ENCODE measurements at regions of chr10 and their contacts with region 1.

Region 1: GRCh38 chr10:68331455-68332258 is at the start of gene HNRNPH3:
- DNase-seq: peak; percentile 97 to 100 (median 99)
- ATAC-seq: peak; percentile 80 to 84
- H3K4me3 Mint-ChIP-seq: peak within 1 kb of the TSS; percentile 97 to 100 (median 99)
- H3K27ac Mint-ChIP-seq: peak within 1 kb of the TSS; percentile 99 to 100 (median 100)
- H3K4me1 Mint-ChIP-seq: peaks cover 27 to 66% (median 48%) of the 10 kb centered on the region in 4 donors
- H3K27me3 Mint-ChIP-seq: peaks cover 0 to 6% (median 0%) of the 10 kb centered on the region in 5 donors
- polyA plus RNA-seq, gene HNRNPH3: 116 to 166 (median 144) TPM

Region 2: DNA sequence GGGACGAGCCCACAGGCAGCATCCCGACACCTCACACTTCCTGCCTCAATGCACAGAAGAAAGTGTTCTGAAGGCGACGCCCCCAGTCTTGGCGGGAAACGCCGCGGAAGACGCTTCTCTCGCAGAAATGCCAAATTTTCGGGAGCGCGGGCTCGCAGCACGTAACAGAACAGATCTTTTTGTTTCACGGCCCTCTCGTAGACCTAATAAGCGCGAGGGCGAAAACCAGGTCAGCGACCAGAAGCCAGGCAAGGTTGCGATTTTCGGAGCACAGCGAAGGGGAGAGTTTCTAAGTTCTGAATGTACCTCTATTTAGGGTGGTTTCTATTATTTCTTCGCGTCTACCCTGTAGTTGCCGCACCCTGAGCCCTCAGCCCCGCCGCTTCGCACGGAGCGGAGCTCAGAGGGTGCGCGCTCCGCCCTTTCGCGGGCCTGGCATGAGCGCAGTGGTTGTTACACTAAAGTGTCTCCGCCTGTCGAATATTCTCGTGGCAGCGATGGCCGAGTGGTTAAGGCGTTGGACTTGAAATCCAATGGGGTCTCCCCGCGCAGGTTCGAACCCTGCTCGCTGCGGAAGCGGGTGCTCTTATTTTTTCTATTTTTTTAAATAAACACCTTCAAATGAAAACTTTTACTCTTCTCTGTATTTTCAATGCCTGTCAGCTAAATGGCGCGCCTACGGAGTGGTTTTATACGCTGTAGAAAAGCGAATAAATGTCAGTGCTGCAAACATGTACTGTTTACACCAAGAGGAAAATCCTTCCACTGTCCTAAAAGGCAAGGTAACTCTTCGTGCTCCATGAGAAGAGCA is 567.4 kb before region 1 on chr10:
- POLR2A ChIA-PET with region 1: interaction called, 18 read pairs
- DNase-seq: peak; percentile 86 to 100 (median 96)
- ATAC-seq: peak; percentile 82 to 85
- H3K4me3 Mint-ChIP-seq: peak overlapping the region; percentile 86 to 99 (median 93)
- H3K27ac Mint-ChIP-seq: peak overlapping the region; percentile 97 to 100 (median 99)
- H3K4me1 Mint-ChIP-seq: peaks cover 7 to 26% (median 19%) of the 10 kb centered on the region in 4 donors
- H3K27me3 Mint-ChIP-seq: peaks cover 0 to 5% (median 0%) of the 10 kb centered on the region in 5 donors

Region 3: DNA sequence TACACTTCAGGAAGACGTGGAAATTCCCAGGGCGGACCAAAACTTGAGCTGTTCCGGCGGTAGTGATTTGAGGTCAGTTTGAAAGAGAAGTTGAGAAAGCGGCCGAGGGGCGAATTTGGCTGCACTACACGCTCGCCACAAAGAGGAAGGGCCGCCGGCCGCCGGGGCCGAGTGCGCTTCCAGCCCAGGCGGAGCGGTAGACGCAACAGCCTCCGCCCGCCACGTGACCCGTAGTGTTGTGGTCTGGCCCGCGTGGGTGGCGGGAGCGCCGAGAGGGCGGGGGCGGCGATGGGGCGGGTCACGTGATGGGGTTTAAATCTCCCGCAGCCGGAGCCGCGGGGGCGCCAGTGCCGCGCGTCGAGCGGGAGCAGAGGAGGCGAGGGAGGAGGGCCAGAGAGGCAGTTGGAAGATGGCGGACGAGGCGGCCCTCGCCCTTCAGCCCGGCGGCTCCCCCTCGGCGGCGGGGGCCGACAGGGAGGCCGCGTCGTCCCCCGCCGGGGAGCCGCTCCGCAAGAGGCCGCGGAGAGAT is 447.3 kb before region 1 on chr10 and contains the start of gene SIRT1:
- POLR2A ChIA-PET with region 1: interaction called, 30 read pairs
- DNase-seq: peak; percentile 88 to 95 (median 92)
- ATAC-seq: peak; percentile 78 to 82
- H3K4me3 Mint-ChIP-seq: peak within 1 kb of the TSS; percentile 90 to 98 (median 95)
- H3K27ac Mint-ChIP-seq: peak within 1 kb of the TSS; percentile 94 to 98 (median 96)
- H3K4me1 Mint-ChIP-seq: peaks cover 16 to 45% (median 35%) of the 10 kb centered on the region in 4 donors
- H3K27me3 Mint-ChIP-seq: no peaks in the 10 kb centered on the region
- polyA plus RNA-seq, gene SIRT1: 10.2 to 18.7 (median 12.4) TPM

Region 4: GRCh38 chr10:68288717-68289116 is 42.9 kb before region 1 on chr10:
- POLR2A ChIA-PET with region 1: no interaction called
- DNase-seq: no peak
- ATAC-seq: no peak
- H3K4me3 Mint-ChIP-seq: no peak overlapping the region
- H3K27ac Mint-ChIP-seq: no peak overlapping the region
- H3K4me1 Mint-ChIP-seq: peaks cover 0 to 2% (median 0%) of the 10 kb centered on the region in 4 donors
- H3K27me3 Mint-ChIP-seq: no peaks in the 10 kb centered on the region

Region 5: GRCh38 chr10:68318331-68319059 is 13.2 kb before region 1 on chr10:
- POLR2A ChIA-PET with region 1: interaction called, 42 read pairs
- DNase-seq: no peak
- ATAC-seq: no peak
- H3K4me3 Mint-ChIP-seq: no peak overlapping the region
- H3K27ac Mint-ChIP-seq: peak overlapping the region in 1 of 10 donors; percentile 1
- H3K4me1 Mint-ChIP-seq: peaks cover 8 to 11% (median 9%) of the 10 kb centered on the region in 4 donors
- H3K27me3 Mint-ChIP-seq: peaks cover 0 to 2% (median 0%) of the 10 kb centered on the region in 5 donors

Region 6: GRCh38 chr10:68348265-68348741 is 16.6 kb after region 1 on chr10:
- POLR2A ChIA-PET with region 1: interaction called, 38 read pairs
- DNase-seq: peak; percentile 14 to 69 (median 38)
- ATAC-seq: peak; percentile 66 to 67
- H3K4me3 Mint-ChIP-seq: no peak overlapping the region
- H3K27ac Mint-ChIP-seq: peak overlapping the region in 9 of 10 donors; percentile 57 to 90 (median 86)
- H3K4me1 Mint-ChIP-seq: peaks cover 2 to 8% (median 5%) of the 10 kb centered on the region in 4 donors
- H3K27me3 Mint-ChIP-seq: no peaks in the 10 kb centered on the region

Region 7: GRCh38 chr10:68364101-68364886 is 32.6 kb after region 1 on chr10:
- POLR2A ChIA-PET with region 1: no interaction called
- DNase-seq: no peak
- ATAC-seq: no peak
- H3K4me3 Mint-ChIP-seq: no peak overlapping the region
- H3K27ac Mint-ChIP-seq: peak overlapping the region in 5 of 10 donors; percentile 12 to 74 (median 36)
- H3K4me1 Mint-ChIP-seq: no peaks in the 10 kb centered on the region
- H3K27me3 Mint-ChIP-seq: no peaks in the 10 kb centered on the region

Region 8: DNA sequence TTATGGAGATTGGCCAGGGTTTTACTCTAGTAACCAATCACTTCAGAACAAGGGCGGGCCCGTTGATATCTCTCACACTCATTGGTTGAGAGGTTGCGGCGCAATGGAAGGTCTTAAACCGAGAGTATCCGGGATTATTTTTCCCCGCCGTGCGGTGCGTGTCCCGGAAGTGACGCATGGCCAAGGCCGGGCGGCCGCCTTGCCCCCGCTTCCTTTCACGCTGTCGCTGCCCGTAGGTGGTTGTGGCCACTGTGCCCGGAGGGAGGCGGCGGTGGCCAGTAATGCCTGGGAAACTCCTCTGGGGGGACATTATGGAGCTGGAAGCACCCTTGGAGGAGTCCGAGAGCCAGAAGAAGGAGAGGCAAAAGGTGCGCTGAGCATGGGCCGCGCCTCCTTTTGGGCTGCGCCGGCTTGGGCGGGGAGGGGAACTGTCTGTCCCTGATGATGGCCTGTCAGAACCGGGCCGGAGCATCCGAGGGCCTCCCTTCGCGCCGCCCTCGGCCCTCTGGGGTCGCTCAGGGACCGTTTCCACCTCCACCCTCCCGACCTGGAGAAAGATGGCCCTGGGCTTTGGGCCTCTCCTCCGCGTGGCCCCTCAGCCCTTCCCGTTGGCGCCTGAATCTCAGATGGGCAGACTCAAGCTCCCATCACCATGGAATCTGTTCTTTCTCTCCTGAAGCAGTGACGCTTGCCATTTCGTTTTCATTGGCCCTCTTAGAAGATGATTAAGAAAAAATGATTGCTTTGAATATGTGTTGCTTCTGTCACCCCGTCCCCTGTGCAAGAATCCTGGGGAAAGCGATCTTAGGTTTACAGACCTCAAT is 569.7 kb after region 1 on chr10 and contains the start of gene DDX50:
- POLR2A ChIA-PET with region 1: interaction called, 11 read pairs
- DNase-seq: peak; percentile 83 to 98 (median 96)
- ATAC-seq: peak; percentile 96
- H3K4me3 Mint-ChIP-seq: peak within 1 kb of the TSS; percentile 87 to 100 (median 98)
- H3K27ac Mint-ChIP-seq: peak within 1 kb of the TSS; percentile 97 to 100 (median 99)
- H3K4me1 Mint-ChIP-seq: peaks cover 24 to 49% (median 47%) of the 10 kb centered on the region in 4 donors
- H3K27me3 Mint-ChIP-seq: peaks cover 0 to 3% (median 0%) of the 10 kb centered on the region in 5 donors
- polyA plus RNA-seq, gene DDX50: 34.1 to 45.7 (median 41.6) TPM

Measured in naive thymus-derived CD8-positive, alpha-beta T cell (primary cell).